ENCODE measurements at regions of chr2 and their contacts with region 1.

Region 1: DNA sequence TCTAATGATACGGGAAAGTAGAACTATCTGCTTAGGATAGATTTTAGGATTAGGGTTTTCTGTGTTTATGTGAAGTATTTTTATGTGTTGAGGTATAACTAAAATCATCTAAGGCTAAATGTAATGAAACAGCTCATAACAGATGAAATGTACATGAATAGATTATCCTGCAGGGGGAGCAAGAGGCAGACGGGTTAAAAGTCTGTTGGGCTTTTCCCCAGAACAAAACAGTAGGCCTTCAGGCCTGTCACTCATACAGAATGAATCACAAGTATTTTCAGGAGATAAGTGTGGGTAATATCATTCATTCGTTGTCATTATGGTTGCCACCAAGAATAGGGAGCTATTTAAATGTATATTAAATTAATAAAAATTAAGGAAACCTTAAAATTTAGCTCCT is 107.9 kb upstream of the IL1R2 start:
- DNase-seq: peak; percentile 31 to 51
- ATAC-seq: peak; percentile 50 to 87; a peak in 4 of 6 replicates
- H3K4me3 ChIP-seq: no peak overlapping the region
- H3K27ac ChIP-seq: no peak overlapping the region
- H3K4me1 ChIP-seq: no peaks in the 10 kb centered on the region
- CTCF ChIP-seq: peak; percentile 70
- EP300 ChIP-seq: no peak
- POLR2A ChIP-seq: no peak
- RAD21 ChIP-seq: peak; percentile 66 to 67

Region 2: DNA sequence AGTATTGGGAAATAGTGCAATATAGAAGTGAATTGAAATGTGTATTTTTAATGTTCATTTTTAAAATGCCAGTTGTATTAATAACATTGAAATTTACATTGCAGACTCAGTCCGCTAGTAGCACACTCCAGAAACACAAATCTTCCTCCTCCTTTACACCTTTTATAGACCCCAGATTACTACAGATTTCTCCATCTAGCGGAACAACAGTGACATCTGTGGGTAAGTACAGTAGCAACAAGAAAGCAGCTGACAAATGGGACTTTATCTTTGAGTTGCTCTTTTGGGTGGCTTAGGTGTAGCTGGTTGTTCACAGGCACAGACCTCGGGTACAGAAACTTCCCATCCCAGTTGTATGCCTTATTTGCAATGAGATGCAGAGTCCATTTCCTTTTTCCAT is 10.3 kb before region 1 on chr2:
- CTCF ChIA-PET with region 1: interaction called, 14 read pairs
- POLR2A ChIA-PET with region 1: no interaction called
- DNase-seq: peak; percentile 7 to 28
- ATAC-seq: peak in 1 of 2 experiments; percentile 59; a peak in 3 of 6 replicates
- H3K4me3 ChIP-seq: no peak overlapping the region
- H3K27ac ChIP-seq: no peak overlapping the region
- H3K4me1 ChIP-seq: no peaks in the 10 kb centered on the region
- CTCF ChIP-seq: peak; percentile 45
- EP300 ChIP-seq: no peak
- POLR2A ChIP-seq: no peak
- RAD21 ChIP-seq: peak; percentile 62 to 66

Region 3: GRCh38 chr2:101900375-101900774 is 16.5 kb after region 1 on chr2:
- CTCF ChIA-PET with region 1: interaction called, 12 read pairs
- POLR2A ChIA-PET with region 1: no interaction called
- DNase-seq: no peak
- ATAC-seq: no peak
- H3K4me3 ChIP-seq: no peak overlapping the region
- H3K27ac ChIP-seq: no peak overlapping the region
- H3K4me1 ChIP-seq: no peaks in the 10 kb centered on the region
- CTCF ChIP-seq: no peak
- EP300 ChIP-seq: no peak
- POLR2A ChIP-seq: no peak
- RAD21 ChIP-seq: no peak